ENCODE measurements at regions of chr3 and their contacts with region 1.

Region 1: DNA sequence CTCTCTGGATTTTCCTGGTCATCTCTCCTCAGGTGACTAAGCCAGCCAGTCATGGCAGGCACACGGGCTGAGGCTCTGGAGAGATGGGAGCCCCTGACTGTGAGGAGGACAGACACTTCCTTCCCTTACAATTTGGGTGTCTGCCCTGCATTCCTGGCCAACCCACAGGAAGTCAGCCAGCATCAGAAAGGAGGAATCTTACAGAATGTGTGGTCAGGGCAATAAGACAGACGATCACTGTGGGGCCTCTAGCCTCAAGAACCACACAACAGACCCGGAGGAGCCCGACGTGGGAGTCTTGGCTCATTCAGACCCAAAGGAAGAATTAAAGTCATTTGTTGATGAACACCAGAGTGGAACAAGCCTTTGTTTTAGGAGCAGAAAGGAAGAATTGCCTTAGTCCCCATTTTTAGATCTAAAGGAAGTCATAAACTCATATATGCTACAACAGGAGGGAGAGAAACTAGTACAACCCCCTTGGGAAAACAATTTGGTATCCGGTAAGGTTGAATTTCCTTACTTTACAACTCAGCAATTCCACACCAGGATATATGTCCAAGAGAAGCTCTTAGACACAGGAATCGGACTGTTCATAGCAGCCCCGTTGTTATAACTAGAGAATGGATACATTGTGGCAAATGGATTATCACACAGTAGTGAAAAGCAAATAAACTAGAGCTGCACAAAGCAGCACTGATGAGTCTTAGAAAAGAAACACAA is 62.2 kb downstream of the ABTB1 start:
- DNase-seq: peak; percentile 25 to 71
- H3K4me3 ChIP-seq: peak overlapping the region in 1 of 3 donors; percentile 9
- H3K27ac ChIP-seq: peak overlapping the region; percentile 58 to 71
- H3K4me1 ChIP-seq: peaks cover 4 to 20% of the 10 kb centered on the region in 2 donors
- H3K27me3 ChIP-seq: no peaks in the 10 kb centered on the region
- CTCF ChIP-seq: no peak
- POLR2A ChIP-seq: no peak

Region 2: DNA sequence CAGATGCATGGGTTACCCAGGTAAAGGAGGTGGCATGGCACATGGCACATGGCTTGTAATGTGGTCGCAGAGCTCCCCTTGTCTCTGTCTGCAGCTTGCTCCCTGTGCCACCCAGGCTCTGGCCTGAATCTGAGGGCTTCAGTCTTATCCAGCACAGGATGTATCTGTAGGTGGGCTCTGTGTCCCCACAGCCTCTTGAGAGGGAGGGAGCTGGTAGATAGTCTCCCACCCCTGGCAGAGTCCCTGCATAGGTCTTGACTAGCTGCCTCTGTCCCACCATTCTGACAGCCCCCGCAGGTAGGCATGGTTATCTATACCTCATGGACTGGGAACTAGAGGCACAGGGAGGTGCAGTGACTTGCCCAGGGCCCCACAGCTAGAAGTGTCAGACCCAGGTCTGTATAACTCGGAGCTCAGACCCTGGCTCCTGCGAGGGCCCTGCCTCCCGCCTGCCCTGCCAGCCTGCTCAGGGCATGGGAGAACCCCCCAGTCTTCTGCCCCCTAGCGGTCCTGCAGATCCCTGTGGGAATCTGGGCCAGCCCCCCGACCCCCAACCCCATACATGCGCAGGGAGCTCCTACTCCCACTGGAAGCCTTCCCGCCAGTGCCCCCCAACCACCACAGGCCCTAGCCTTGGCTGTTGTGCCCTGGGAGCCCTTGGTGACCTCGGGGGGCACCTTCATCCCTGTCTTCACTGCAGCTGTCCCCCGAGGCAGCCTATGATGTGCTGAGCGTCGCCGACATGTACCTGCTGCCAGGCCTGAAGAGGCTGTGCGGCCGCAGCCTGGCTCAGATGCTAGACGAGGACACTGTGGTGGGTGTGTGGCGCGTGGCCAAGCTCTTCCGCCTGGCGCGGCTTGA is 55.4 kb before region 1 on chr3:
- intact Hi-C with region 1: no loop called
- DNase-seq: peak in 1 of 2 donors; percentile 30
- H3K4me3 ChIP-seq: no peak overlapping the region
- H3K27ac ChIP-seq: peak overlapping the region in 1 of 2 donors; percentile 25
- H3K4me1 ChIP-seq: no peaks in the 10 kb centered on the region
- H3K27me3 ChIP-seq: no peaks in the 10 kb centered on the region
- CTCF ChIP-seq: no peak
- POLR2A ChIP-seq: no peak

Region 3: GRCh38 chr3:127750226-127751031 is 15.5 kb after region 1 on chr3:
- intact Hi-C with region 1: no loop called
- DNase-seq: no peak
- H3K4me3 ChIP-seq: no peak overlapping the region
- H3K27ac ChIP-seq: peak overlapping the region in 1 of 2 donors; percentile 72
- H3K4me1 ChIP-seq: no peaks in the 10 kb centered on the region
- H3K27me3 ChIP-seq: no peaks in the 10 kb centered on the region
- CTCF ChIP-seq: no peak
- POLR2A ChIP-seq: no peak

Region 4: DNA sequence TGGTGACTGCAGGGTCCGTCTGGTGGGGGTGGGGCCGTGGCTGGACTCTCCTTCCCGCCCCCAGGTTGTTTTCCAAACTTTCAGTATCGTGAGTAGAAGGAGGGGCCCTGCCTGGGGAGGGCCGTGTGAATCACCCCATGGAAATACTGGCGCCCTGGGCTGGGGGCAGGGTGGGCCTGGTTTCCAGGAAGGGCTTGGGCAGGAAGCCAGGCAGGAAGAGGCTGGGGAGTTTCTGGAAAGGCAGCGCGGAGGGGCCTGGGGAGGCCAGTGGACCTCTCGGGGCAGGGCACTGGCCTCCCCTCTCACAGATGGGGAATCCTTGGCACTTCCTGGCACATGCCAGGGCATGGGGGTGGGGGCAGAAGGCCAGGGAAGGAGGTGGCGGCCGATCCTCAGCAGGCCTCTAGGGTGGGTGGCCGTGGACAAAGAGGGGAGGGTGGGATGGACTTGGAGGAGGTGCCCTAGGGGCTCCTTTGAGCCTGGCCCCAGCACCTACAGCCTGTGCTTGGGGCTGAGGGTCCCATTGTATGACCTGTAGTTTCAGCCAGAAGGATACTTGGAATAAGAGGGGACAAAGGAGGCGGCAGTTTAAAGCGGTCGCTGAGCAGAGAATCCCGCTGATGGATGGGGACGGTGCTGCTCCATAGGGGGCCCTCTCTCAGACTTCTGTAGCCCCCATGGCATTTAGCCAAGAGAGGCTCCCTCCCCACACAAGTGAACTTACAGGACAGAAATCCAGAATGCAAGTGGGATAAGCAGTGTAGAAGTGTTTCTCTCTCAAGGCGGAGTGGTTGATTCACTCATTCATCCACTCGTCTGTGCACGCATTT is 814.6 kb after region 1 on chr3:
- intact Hi-C with region 1: loop called (anchors 5 kb)
- DNase-seq: peak in 1 of 2 donors; percentile 7
- H3K4me3 ChIP-seq: peak overlapping the region in 2 of 3 donors; percentile 9 to 18
- H3K27ac ChIP-seq: peak overlapping the region; percentile 55 to 70
- H3K4me1 ChIP-seq: no peaks in the 10 kb centered on the region
- H3K27me3 ChIP-seq: peaks cover 0 to under 1% of the 10 kb centered on the region in 2 donors
- CTCF ChIP-seq: no peak
- POLR2A ChIP-seq: no peak